CD4-positive, alpha-beta memory T cell (primary cell): ENCODE measurements at regions of chr19 and their contacts with region 1.

Region 1: GRCh38 chr19:49937750-49938381 is 8.6 kb upstream of the NUP62 start:
- DNase-seq: peak; percentile 59 to 75 (median 65)
- H3K4me3 ChIP-seq: no peak overlapping the region
- H3K4me3 Mint-ChIP-seq: peak overlapping the region in 2 of 8 donors; percentile 36 to 38
- H3K27ac ChIP-seq: no peak overlapping the region
- H3K27ac Mint-ChIP-seq: no peak overlapping the region
- H3K4me1 ChIP-seq: peaks cover 14% of the 10 kb centered on the region
- H3K4me1 Mint-ChIP-seq: peaks cover 9 to 18% (median 10%) of the 10 kb centered on the region in 4 donors
- H3K27me3 ChIP-seq: no peaks in the 10 kb centered on the region
- H3K27me3 Mint-ChIP-seq: peaks cover 3% of the 10 kb centered on the region in 2 donors

Region 2: DNA sequence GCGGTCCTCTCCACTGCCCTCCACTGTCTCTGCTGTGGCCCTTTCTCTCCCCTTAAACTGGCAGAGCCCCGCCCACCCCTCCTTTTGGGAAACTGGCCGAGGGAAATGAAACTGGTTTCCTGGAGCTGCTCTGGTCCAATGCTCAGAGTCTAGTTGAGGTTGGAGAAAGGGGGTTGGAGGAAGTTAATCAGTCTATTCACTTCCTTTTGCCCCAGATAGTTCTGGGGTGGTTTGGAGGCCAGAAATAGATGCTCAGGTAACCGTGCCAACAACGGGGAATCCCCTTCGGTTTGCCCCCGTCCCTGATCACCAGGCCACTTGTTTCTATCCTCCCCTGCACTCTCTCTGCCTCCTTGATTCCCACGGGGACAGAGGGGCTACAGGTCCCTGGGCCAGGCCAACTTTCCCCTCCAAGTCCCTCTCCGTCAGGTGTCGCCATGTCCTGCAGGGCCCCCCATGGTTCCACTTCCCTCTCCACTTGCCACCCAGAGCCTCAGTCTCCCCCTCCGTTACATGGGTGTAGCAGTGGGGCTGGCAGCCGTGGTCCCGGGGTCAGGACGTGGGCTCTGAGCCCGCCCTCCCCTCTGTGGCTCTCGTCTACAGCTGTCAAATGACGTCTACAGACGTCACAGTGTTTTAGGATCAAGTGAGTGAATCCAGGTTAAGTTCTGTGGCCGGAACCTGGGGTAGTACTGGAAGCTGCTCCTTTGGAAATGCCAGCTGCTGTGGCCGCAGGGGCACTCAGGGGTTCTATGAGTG is 40.8 kb before region 1 on chr19 and contains the start of gene IL4I1:
- CTCF ChIA-PET with region 1: no interaction called
- POLR2A ChIA-PET with region 1: interaction called, 4 read pairs
- intact Hi-C with region 1: loop called (anchors 2 kb)
- DNase-seq: peak; percentile 76 to 94 (median 87)
- H3K4me3 ChIP-seq: peak within 1 kb of the TSS; percentile 1 to 44
- H3K4me3 Mint-ChIP-seq: peak within 1 kb of the TSS; percentile 85 to 92 (median 90)
- H3K27ac ChIP-seq: peak within 1 kb of the TSS; percentile 98
- H3K27ac Mint-ChIP-seq: peak within 1 kb of the TSS; percentile 97 to 100 (median 99)
- H3K4me1 ChIP-seq: peaks cover 44% of the 10 kb centered on the region
- H3K4me1 Mint-ChIP-seq: peaks cover 23 to 54% (median 40%) of the 10 kb centered on the region in 4 donors
- H3K27me3 ChIP-seq: no peaks in the 10 kb centered on the region
- H3K27me3 Mint-ChIP-seq: no peaks in the 10 kb centered on the region
- total RNA-seq, gene IL4I1: 2.6 to 3.4 TPM